ENCODE measurements at regions of chr11 and their contacts with region 1.

Region 1: GRCh38 chr11:67265633-67266423 is 445 bp upstream of the GRK2 start:
- DNase-seq: peak; percentile 89
- CTCF ChIP-seq: peak; percentile 93

Region 2: DNA sequence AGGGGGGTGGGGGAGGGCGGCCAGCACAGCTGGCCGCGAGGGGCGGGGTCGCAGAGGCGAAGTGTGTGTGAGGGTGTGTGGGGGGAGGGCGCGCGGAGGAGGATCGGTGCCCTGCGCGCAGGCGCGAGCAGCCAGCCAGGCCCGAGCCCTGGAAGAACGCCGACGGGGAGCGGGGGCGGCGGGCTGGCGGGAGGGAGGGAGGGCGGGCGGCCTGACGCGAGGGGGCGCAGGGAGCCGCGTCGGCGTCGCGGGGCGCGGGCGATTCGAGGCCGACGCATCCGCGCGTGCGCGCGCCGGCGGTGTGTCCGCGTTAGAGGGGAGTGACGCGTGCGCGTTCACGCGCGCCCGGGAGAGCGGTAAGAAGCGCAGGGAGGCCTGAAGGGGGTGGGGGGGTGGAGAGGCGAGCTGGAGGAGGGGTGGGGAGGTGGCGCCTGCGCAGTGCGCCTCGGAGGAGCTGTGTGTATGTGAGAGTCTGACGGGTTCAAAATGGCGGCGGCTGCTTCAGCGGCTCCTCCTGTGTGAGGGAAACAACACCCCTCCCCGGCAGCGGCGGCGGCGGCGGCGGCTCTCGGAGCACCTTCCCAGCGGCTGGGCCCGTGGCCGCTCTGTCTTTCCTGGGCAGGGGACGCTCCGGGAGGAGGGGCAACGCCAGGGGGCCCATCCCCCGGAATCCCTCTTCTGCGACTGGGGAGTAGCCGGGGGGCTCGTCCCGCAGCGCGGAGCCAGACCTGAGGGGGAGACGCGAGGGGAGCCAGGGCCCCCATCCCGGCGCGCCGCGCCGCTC is 146.8 kb before region 1 on chr11 and contains the start of gene KDM2A:
- CTCF ChIA-PET with region 1: interaction called, 11 read pairs
- POLR2A ChIA-PET with region 1: no interaction called
- DNase-seq: peak; percentile 99
- CTCF ChIP-seq: peak; percentile 26

Region 3: DNA sequence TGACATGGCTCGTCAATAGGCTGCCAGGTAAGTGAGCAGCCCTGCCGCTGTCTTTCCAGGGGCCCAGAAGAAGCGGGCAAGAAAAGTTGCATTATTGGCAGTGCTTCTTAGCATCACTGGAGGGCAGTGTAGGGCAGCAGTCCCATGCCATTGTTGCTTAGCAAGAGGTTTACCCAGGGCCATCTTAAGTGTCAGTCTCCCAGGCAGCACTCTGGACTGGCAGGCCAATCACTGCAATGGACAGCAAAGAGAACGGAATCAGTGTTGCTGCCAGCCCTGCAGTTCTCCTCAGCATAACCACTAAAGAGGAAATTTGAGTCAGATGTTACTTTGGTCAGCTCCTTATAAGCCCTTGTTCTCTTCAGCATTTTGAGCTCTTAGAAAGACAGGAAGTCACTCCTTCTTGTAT is 13.0 kb before region 1 on chr11:
- CTCF ChIA-PET with region 1: interaction called, 118 read pairs
- POLR2A ChIA-PET with region 1: no interaction called
- DNase-seq: no peak
- CTCF ChIP-seq: peak; percentile 23

Region 4: DNA sequence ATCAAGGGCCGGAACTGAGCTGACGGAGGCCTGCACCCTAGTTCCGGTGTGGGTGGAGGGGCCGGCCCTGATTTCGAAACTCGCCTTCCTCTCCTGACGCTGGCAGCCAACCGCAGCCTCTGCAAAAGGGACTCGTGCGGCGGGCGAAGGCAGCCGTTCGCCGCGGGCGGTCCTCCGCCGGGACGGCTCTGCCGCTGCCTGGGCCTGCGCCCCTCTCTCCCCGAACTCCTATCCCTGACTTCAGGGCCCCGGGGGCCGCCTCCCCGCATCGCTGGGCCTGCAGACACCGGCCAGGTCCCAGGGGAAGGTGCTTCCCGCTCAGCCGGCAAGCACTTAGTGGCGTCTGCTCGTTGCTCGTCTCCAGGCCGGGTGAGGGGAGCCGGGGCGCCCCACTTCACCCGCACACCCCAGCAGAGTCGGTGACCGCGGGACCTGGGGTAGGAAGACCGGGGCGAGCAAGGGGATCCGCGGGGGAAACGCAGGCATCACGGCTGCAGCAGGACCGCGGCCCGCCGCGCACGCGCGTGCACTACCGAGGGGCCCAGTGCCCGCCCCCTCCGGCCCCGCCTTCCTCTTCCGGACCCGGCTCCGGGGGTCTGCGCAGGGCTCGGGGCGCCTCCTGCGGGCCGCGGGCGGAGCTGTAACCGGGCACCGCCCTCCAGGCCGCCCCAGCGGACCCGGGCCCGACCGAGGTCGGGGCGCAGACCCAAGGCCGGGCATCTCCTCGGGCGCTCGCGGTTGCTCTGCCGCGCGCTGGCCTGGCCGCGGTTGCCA is 22.8 kb after region 1 on chr11:
- CTCF ChIA-PET with region 1: interaction called, 11 read pairs
- POLR2A ChIA-PET with region 1: interaction called, 4 read pairs
- DNase-seq: peak; percentile 91
- CTCF ChIP-seq: peak; percentile 47

Region 5: GRCh38 chr11:67345920-67346799 is 80.3 kb after region 1 on chr11:
- CTCF ChIA-PET with region 1: interaction called, 18 read pairs
- POLR2A ChIA-PET with region 1: no interaction called
- DNase-seq: no peak
- CTCF ChIP-seq: peak; percentile 66

Region 6: GRCh38 chr11:67373925-67374618 is 108.2 kb after region 1 on chr11:
- CTCF ChIA-PET with region 1: interaction called, 72 read pairs
- POLR2A ChIA-PET with region 1: interaction called, 3 read pairs
- DNase-seq: peak; percentile 65
- CTCF ChIP-seq: peak; percentile 48

Region 7: DNA sequence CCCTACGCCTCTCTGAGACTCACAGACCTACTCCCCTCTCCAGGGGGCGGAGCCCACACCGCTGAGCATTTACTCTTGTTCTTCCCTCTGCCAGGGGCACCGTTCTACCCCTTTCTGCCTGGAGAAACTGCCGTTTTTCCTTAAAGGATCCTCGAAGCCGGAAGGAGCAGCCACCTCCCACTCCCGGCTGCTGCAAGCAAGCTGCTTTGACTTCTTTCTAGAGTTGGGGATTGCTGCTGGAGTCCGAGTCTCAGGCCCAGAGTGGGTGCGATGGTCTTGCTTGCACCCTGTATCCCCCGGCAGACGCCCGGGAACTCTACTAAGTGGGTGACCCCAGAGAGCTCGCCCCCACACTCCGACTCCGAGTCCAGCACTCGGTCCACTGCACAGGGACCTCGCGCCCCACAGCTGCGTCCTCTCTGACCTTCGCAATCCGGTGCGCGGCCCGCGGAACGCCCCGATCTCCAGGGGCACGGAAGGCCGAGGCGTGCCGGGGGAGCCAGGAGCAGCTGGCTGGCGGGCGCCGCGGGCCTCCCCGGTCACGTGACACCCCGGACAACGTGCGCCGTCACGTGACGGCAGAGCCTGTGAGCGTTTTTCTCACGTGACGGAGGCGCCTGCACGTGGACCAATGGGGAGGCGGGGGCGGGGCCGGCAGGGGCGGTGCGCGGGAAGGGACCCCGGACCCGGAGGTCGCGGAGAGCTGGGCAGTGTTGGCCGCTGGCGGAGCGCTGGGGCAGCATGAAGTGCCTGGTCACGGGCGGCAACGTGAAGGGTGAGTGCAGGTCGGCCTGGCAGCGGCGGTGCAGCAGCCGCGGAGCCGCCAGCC is 125.7 kb after region 1 on chr11 and contains the start of gene RAD9A:
- CTCF ChIA-PET with region 1: interaction called, 10 read pairs
- POLR2A ChIA-PET with region 1: interaction called, 3 read pairs
- DNase-seq: peak; percentile 98
- CTCF ChIP-seq: no peak

Region 8: GRCh38 chr11:67482825-67483798 is 217.3 kb after region 1 on chr11 and contains the start of gene AIP:
- CTCF ChIA-PET with region 1: no interaction called
- POLR2A ChIA-PET with region 1: no interaction called
- DNase-seq: peak; percentile 94
- CTCF ChIP-seq: no peak